ENCODE measurements at regions of chr2 and their contacts with region 1.

Region 1: GRCh38 chr2:37832590-37833197 is 92.4 kb upstream of the RMDN2 start:
- DNase-seq: peak; percentile 68
- ATAC-seq: peak; percentile 92
- H3K4me3 ChIP-seq: no peak overlapping the region
- H3K27ac ChIP-seq: peak overlapping the region; percentile 50
- H3K4me1 ChIP-seq: peaks cover 4% of the 10 kb centered on the region
- H3K27me3 ChIP-seq: no peaks in the 10 kb centered on the region
- CTCF ChIP-seq: peak; percentile 74 to 88 (median 84)
- EP300 ChIP-seq: no peak
- POLR2A ChIP-seq: no peak
- RAD21 ChIP-seq: peak; percentile 100

Region 2: DNA sequence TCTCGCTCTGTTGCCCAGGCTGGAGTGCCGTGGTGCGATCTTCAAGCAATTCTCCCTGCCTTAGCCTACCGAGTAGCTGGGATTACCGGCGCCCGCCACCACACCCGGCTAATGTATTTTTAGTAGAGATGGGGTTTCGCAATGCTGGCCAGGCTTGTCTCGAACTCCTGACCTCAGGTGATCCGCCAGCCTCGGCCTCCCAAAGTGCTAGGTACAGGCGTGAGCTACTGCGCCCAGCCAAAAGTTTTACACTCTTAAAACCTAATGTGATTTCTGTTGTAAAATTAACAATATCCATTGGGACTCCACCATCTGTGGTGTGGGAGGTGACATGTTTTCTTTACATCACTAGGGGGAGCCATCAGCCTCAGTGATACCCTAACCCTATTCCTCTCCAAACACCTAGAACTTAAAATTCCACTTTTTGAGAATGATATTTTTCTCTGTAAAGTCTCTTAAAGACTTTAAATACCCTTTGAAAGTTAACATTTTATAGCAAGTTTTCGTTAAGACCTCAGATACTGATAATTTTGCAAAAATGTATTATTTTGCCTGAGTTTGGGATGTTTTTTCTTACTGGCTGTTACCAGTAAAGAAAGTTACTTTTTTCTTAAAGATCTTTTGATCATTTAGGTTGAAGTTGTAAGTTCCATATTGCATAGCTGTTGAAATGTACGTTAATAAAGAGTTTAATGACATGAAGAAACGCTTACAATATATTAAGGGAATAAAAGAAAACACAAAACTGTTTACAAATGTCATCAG is 664.3 kb before region 1 on chr2:
- CTCF ChIA-PET with region 1: interaction called, 6 read pairs
- POLR2A ChIA-PET with region 1: no interaction called
- RAD21 ChIA-PET with region 1: interaction called, 7 read pairs
- SMC1A ChIA-PET with region 1: interaction called, 5 read pairs
- in situ Hi-C with region 1: no loop called
- intact Hi-C with region 1: loop called (anchors 10 kb)
- DNase-seq: no peak
- ATAC-seq: peak; percentile 91
- H3K4me3 ChIP-seq: no peak overlapping the region
- H3K27ac ChIP-seq: no peak overlapping the region
- H3K4me1 ChIP-seq: no peaks in the 10 kb centered on the region
- H3K27me3 ChIP-seq: no peaks in the 10 kb centered on the region
- CTCF ChIP-seq: peak; percentile 70 to 75 (median 73)
- EP300 ChIP-seq: no peak
- POLR2A ChIP-seq: no peak
- RAD21 ChIP-seq: peak; percentile 73

Region 3: GRCh38 chr2:37543999-37544557 is 288.6 kb before region 1 on chr2:
- CTCF ChIA-PET with region 1: interaction called, 6 read pairs
- POLR2A ChIA-PET with region 1: no interaction called
- RAD21 ChIA-PET with region 1: interaction called, 11 read pairs
- SMC1A ChIA-PET with region 1: interaction called, 10 read pairs
- in situ Hi-C with region 1: no loop called
- intact Hi-C with region 1: loop called (anchors 10 kb)
- DNase-seq: no peak
- ATAC-seq: no peak
- H3K4me3 ChIP-seq: no peak overlapping the region
- H3K27ac ChIP-seq: no peak overlapping the region
- H3K4me1 ChIP-seq: peaks cover 8% of the 10 kb centered on the region; the same call in 1 of the 2 replicates
- H3K27me3 ChIP-seq: no peaks in the 10 kb centered on the region
- CTCF ChIP-seq: no peak
- EP300 ChIP-seq: no peak
- POLR2A ChIP-seq: no peak
- RAD21 ChIP-seq: no peak

Region 4: GRCh38 chr2:37615804-37616676 is 216.7 kb before region 1 on chr2:
- CTCF ChIA-PET with region 1: interaction called, 5 read pairs
- POLR2A ChIA-PET with region 1: no interaction called
- RAD21 ChIA-PET with region 1: interaction called, 9 read pairs
- SMC1A ChIA-PET with region 1: interaction called, 16 read pairs
- in situ Hi-C with region 1: no loop called
- intact Hi-C with region 1: no loop called
- DNase-seq: no peak
- ATAC-seq: peak; percentile 58
- H3K4me3 ChIP-seq: no peak overlapping the region
- H3K27ac ChIP-seq: peak overlapping the region; percentile 72
- H3K4me1 ChIP-seq: peaks cover 17% of the 10 kb centered on the region
- H3K27me3 ChIP-seq: no peaks in the 10 kb centered on the region
- CTCF ChIP-seq: no peak
- EP300 ChIP-seq: no peak
- POLR2A ChIP-seq: no peak
- RAD21 ChIP-seq: no peak

Region 5: DNA sequence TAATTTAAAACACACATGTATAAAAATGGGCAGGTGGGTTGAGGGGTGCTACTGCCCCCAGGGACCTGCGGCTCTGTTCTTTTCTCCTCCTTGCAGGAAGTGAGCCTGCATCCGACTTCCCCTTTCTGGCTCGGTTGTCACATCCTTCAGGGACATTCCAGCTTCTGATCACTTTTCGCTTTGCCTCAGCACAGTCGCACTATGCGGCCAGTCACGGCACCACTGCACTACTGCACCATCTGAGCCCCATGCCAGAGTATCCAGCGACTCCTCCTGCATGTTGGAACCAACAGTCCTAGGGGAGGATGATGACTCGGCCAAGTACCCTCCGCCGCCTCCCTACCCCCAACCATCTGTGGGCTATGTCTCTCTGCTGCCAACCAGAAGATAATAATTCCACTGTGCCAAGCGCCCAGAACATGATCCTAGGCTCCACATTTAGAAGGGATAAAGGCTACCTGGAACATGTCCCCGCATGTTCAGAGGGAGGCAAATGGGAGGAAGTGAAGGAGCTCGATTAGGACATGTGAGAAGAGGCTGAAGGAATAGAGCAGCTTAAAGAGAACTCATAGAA is 178.8 kb before region 1 on chr2:
- CTCF ChIA-PET with region 1: interaction called, 9 read pairs
- POLR2A ChIA-PET with region 1: interaction called, 3 read pairs
- RAD21 ChIA-PET with region 1: interaction called, 8 read pairs
- SMC1A ChIA-PET with region 1: interaction called, 13 read pairs
- in situ Hi-C with region 1: no loop called
- intact Hi-C with region 1: loop called (anchors 5 kb)
- DNase-seq: peak; percentile 84
- ATAC-seq: peak; percentile 78
- H3K4me3 ChIP-seq: peak overlapping the region; percentile 75
- H3K27ac ChIP-seq: peak overlapping the region; percentile 99
- H3K4me1 ChIP-seq: peaks cover 69% of the 10 kb centered on the region
- H3K27me3 ChIP-seq: no peaks in the 10 kb centered on the region
- CTCF ChIP-seq: no peak
- EP300 ChIP-seq: peak; percentile 91 to 94
- POLR2A ChIP-seq: peak; percentile 93
- RAD21 ChIP-seq: peak; percentile 4; the same call in 1 of the 2 replicates

Region 6: DNA sequence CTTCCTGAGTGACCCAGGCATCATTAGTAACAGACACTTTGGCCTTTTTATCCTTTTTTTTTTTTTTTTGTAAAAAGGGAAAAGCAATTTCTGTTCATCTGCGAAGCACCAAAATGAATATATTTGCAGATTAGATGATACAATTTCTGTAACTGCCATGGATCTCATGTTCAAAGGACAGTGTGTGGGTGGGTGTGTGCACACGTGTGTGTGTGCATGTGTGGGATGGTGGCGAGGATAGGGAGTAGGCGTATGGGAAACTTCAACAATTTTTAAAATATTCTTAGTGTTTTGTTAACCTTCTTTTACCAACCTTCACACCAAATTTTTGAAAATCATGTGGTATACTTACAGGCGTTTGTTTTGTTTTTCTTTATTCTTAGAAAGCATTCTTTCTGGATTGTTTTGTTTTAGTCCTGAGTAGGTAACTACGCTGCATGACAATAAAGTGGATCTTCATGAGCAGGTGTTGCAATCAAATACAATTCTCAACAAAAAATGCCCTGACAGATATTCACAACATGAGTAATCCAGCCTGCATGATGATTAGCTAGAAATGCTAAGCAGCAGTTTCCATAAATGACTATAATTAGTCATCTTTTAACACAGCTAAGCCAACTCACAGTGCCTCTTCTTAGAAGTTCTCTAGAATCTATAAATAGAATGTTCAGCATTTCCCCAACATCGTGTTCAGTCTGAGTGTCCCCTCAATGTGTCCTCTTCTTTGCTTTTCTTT is 38.9 kb after region 1 on chr2:
- CTCF ChIA-PET with region 1: interaction called, 312 read pairs
- POLR2A ChIA-PET with region 1: interaction called, 12 read pairs
- RAD21 ChIA-PET with region 1: interaction called, 185 read pairs
- SMC1A ChIA-PET with region 1: interaction called, 197 read pairs
- in situ Hi-C with region 1: no loop called
- intact Hi-C with region 1: no loop called
- DNase-seq: no peak
- ATAC-seq: peak; percentile 77
- H3K4me3 ChIP-seq: no peak overlapping the region
- H3K27ac ChIP-seq: no peak overlapping the region
- H3K4me1 ChIP-seq: peaks cover 16% of the 10 kb centered on the region
- H3K27me3 ChIP-seq: peaks cover 0 to 2% of the 10 kb centered on the region in 2 experiments; a peak in 1 of 4 replicates
- CTCF ChIP-seq: no peak
- EP300 ChIP-seq: peak in 1 of 2 experiments; percentile 18; a peak in 2 of 4 replicates
- POLR2A ChIP-seq: no peak
- RAD21 ChIP-seq: no peak

Measured in GM12878 (cell line).